CD8-positive, alpha-beta T cell (primary cell): ENCODE measurements at regions of chr5 and their contacts with region 1.

Region 1: DNA sequence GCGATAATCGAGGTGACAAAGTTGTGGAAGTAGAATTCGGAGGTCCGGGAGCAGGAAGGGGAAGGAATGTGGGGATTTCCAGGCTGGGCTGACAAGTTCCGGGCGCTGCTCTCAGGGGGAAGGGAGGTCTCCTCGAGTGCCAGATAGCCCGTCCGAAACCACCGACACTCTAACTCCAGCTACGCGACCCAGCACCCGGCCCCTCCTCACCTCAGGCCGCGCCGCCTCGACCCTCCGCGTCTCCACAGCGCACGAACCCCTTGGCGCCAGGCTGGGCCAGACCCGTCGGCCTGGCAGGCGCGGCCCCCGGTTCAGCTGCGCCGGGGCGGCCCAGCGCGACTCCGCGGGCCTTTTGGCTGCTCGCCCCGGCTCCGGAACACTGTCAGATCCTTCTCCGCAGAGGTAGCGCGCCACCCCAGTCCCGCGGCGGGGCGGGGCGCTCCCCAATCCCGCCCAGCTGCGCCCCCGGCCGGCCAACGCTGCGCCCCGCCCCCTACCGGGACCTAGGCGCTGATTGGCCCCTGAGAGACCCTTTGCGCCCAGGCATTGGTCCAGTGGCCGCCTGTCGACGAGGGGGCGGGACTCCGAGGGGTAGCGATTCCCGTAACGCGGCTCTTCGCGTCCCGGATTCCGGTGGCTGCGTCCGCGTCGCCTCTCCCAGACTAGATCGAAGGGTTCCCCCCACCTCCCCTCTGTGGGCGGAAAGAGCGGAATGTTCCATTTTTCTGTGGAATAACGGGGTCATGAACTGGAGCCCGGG is at the start of gene IL6ST:
- DNase-seq: peak; percentile 90 to 97 (median 95)
- ATAC-seq: peak; percentile 93
- H3K4me3 ChIP-seq: peak within 1 kb of the TSS; percentile 87 to 89
- H3K4me3 Mint-ChIP-seq: peak within 1 kb of the TSS; percentile 99
- H3K27ac ChIP-seq: peak within 1 kb of the TSS; percentile 93
- H3K27ac Mint-ChIP-seq: peak within 1 kb of the TSS; percentile 98
- H3K4me1 ChIP-seq: peaks cover 26% of the 10 kb centered on the region
- H3K4me1 Mint-ChIP-seq: peaks cover 54% of the 10 kb centered on the region
- H3K27me3 ChIP-seq: no peaks in the 10 kb centered on the region
- H3K27me3 Mint-ChIP-seq: no peaks in the 10 kb centered on the region
- CTCF ChIP-seq: no peak
- total RNA-seq, gene IL6ST: 201 to 214 TPM

Region 2: GRCh38 chr5:55534436-55535198 is 460.1 kb before region 1 on chr5 and contains the start of gene PLPP1:
- CTCF ChIA-PET with region 1: no interaction called
- POLR2A ChIA-PET with region 1: no interaction called
- intact Hi-C with region 1: loop called in 1 of 2 experiments (anchors 10 kb)
- DNase-seq: peak; percentile 57 to 93 (median 79)
- ATAC-seq: peak; percentile 79
- H3K4me3 ChIP-seq: peak within 1 kb of the TSS; percentile 81 to 97
- H3K4me3 Mint-ChIP-seq: peak within 1 kb of the TSS; percentile 93
- H3K27ac ChIP-seq: peak within 1 kb of the TSS; percentile 81 to 87
- H3K27ac Mint-ChIP-seq: peak within 1 kb of the TSS; percentile 92
- H3K4me1 ChIP-seq: peaks cover 25% of the 10 kb centered on the region
- H3K4me1 Mint-ChIP-seq: peaks cover 37% of the 10 kb centered on the region
- H3K27me3 ChIP-seq: no peaks in the 10 kb centered on the region
- H3K27me3 Mint-ChIP-seq: no peaks in the 10 kb centered on the region
- CTCF ChIP-seq: no peak
- total RNA-seq, gene PLPP1: 5.8 to 5.9 TPM

Region 3: GRCh38 chr5:55982957-55983381 is 11.8 kb before region 1 on chr5:
- CTCF ChIA-PET with region 1: interaction called, 7 read pairs
- POLR2A ChIA-PET with region 1: interaction called, 6 read pairs
- intact Hi-C with region 1: loop called in 1 of 2 experiments (anchors 1 kb)
- DNase-seq: peak in 4 of 9 experiments; percentile 18 to 62 (median 42)
- ATAC-seq: peak; percentile 35
- H3K4me3 ChIP-seq: no peak overlapping the region
- H3K4me3 Mint-ChIP-seq: peak overlapping the region; percentile 59
- H3K27ac ChIP-seq: no peak overlapping the region
- H3K27ac Mint-ChIP-seq: peak overlapping the region; percentile 64
- H3K4me1 ChIP-seq: peaks cover 56% of the 10 kb centered on the region
- H3K4me1 Mint-ChIP-seq: peaks cover 69% of the 10 kb centered on the region
- H3K27me3 ChIP-seq: no peaks in the 10 kb centered on the region
- H3K27me3 Mint-ChIP-seq: no peaks in the 10 kb centered on the region
- CTCF ChIP-seq: peak; percentile 50

Region 4: DNA sequence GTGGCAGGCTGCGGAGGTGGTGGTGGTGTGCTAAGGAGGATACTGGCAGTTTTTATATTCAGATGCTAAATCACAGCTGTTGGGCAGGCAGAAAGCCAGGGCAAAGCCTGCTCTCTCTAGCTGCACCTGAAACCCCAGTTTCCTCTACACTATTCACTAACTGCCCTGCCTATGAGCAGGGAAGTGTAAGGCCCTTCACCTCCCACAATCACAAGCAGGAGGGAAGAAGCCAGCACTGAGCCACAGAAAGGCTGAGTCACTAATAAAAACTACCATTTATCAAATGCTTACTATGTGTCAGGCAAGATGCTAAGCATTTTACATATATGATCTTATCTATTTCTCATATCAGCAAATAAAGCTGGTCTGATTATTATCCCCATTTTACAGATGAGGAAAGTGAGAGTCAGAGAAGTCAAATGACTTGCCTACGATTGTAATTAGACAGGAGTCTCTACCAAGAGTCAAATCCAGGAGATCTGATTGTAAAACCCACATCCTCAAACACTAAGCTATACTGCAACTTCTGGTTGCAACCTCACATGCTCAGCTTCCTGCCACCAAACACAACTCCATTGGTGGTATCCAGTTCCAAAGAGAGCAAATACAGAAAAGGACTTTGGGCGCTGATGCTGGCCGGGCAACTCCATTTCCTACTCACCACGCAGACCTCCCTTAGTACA is 17.7 kb after region 1 on chr5:
- CTCF ChIA-PET with region 1: interaction called, 5 read pairs
- POLR2A ChIA-PET with region 1: interaction called, 9 read pairs
- intact Hi-C with region 1: loop called in 1 of 2 experiments (anchors 2 kb)
- DNase-seq: peak in 6 of 9 experiments; percentile 9 to 60 (median 30)
- ATAC-seq: peak; percentile 91
- H3K4me3 ChIP-seq: no peak overlapping the region
- H3K4me3 Mint-ChIP-seq: no peak overlapping the region
- H3K27ac ChIP-seq: peak overlapping the region in 1 of 2 experiments; percentile 25
- H3K27ac Mint-ChIP-seq: peak overlapping the region; percentile 76
- H3K4me1 ChIP-seq: peaks cover 23% of the 10 kb centered on the region
- H3K4me1 Mint-ChIP-seq: peaks cover 26% of the 10 kb centered on the region
- H3K27me3 ChIP-seq: no peaks in the 10 kb centered on the region
- H3K27me3 Mint-ChIP-seq: no peaks in the 10 kb centered on the region
- CTCF ChIP-seq: no peak

Region 5: GRCh38 chr5:56056875-56057274 is 62.1 kb after region 1 on chr5:
- CTCF ChIA-PET with region 1: no interaction called
- POLR2A ChIA-PET with region 1: interaction called, 13 read pairs
- intact Hi-C with region 1: loop called (anchors 2 kb)
- DNase-seq: no peak
- ATAC-seq: no peak
- H3K4me3 ChIP-seq: no peak overlapping the region
- H3K4me3 Mint-ChIP-seq: no peak overlapping the region
- H3K27ac ChIP-seq: no peak overlapping the region
- H3K27ac Mint-ChIP-seq: peak overlapping the region; percentile 89
- H3K4me1 ChIP-seq: peaks cover 87% of the 10 kb centered on the region
- H3K4me1 Mint-ChIP-seq: peaks cover 75% of the 10 kb centered on the region
- H3K27me3 ChIP-seq: no peaks in the 10 kb centered on the region
- H3K27me3 Mint-ChIP-seq: no peaks in the 10 kb centered on the region
- CTCF ChIP-seq: no peak

Region 6: DNA sequence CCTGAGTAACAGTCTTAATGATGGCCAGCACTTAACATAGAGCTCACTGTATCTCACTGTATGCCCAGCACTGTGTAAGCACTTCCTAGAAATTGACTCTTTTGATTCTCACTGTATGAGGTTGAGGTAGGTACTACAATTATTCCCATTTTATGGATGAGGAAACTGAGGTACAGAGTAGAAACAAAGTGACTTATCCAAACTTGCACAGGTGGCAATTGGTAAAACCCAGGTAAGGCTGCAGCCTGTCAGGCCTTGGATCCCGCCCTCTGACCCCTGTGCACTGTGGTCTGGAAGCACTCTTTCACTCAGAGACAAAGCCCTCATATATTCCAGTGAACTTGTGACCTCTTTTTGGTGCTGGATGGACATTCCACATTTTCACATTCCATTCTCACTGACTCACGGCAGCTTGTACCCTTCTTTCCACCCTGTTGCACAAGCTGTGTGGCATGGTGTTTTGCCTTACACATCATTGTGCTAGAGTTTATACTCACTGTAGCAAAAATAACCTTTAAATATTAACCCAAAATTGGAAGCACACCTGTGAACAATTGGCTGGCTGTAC is 216.6 kb after region 1 on chr5:
- CTCF ChIA-PET with region 1: no interaction called
- POLR2A ChIA-PET with region 1: no interaction called
- intact Hi-C with region 1: no loop called
- DNase-seq: no peak
- ATAC-seq: no peak
- H3K4me3 ChIP-seq: no peak overlapping the region
- H3K4me3 Mint-ChIP-seq: no peak overlapping the region
- H3K27ac ChIP-seq: no peak overlapping the region
- H3K27ac Mint-ChIP-seq: no peak overlapping the region
- H3K4me1 ChIP-seq: no peaks in the 10 kb centered on the region
- H3K4me1 Mint-ChIP-seq: no peaks in the 10 kb centered on the region
- H3K27me3 ChIP-seq: no peaks in the 10 kb centered on the region
- H3K27me3 Mint-ChIP-seq: no peaks in the 10 kb centered on the region
- CTCF ChIP-seq: no peak

Region 7: GRCh38 chr5:56909294-56910209 is 914.8 kb after region 1 on chr5 and contains the start of gene SETD9:
- CTCF ChIA-PET with region 1: no interaction called
- POLR2A ChIA-PET with region 1: no interaction called
- intact Hi-C with region 1: loop called in 1 of 2 experiments (anchors 2 kb)
- DNase-seq: peak; percentile 67 to 94 (median 87)
- ATAC-seq: peak; percentile 82
- H3K4me3 ChIP-seq: peak within 1 kb of the TSS; percentile 88
- H3K4me3 Mint-ChIP-seq: peak within 1 kb of the TSS; percentile 89
- H3K27ac ChIP-seq: peak within 1 kb of the TSS; percentile 61 to 87
- H3K27ac Mint-ChIP-seq: peak within 1 kb of the TSS; percentile 88
- H3K4me1 ChIP-seq: peaks cover 8% of the 10 kb centered on the region
- H3K4me1 Mint-ChIP-seq: peaks cover 20% of the 10 kb centered on the region
- H3K27me3 ChIP-seq: no peaks in the 10 kb centered on the region
- H3K27me3 Mint-ChIP-seq: no peaks in the 10 kb centered on the region
- CTCF ChIP-seq: no peak
- total RNA-seq, gene SETD9: 2.5 to 2.9 TPM

Region 8: GRCh38 chr5:57173185-57174127 is 1178.7 kb after region 1 on chr5 and contains the start of gene GPBP1:
- CTCF ChIA-PET with region 1: no interaction called
- POLR2A ChIA-PET with region 1: interaction called, 3 read pairs
- intact Hi-C with region 1: loop called (anchors 1 to 5 kb)
- DNase-seq: peak; percentile 95 to 100 (median 98)
- ATAC-seq: peak; percentile 74
- H3K4me3 ChIP-seq: peak within 1 kb of the TSS; percentile 87 to 100
- H3K4me3 Mint-ChIP-seq: peak within 1 kb of the TSS; percentile 96
- H3K27ac ChIP-seq: peak within 1 kb of the TSS; percentile 91 to 98
- H3K27ac Mint-ChIP-seq: peak within 1 kb of the TSS; percentile 98
- H3K4me1 ChIP-seq: peaks cover 18% of the 10 kb centered on the region
- H3K4me1 Mint-ChIP-seq: peaks cover 38% of the 10 kb centered on the region
- H3K27me3 ChIP-seq: no peaks in the 10 kb centered on the region
- H3K27me3 Mint-ChIP-seq: no peaks in the 10 kb centered on the region
- CTCF ChIP-seq: no peak
- total RNA-seq, gene GPBP1: 164 to 165 TPM